Naive thymus-derived CD4-positive, alpha-beta T cell (primary cell): ENCODE measurements at regions of chr7 and their contacts with region 1.

Region 1: DNA sequence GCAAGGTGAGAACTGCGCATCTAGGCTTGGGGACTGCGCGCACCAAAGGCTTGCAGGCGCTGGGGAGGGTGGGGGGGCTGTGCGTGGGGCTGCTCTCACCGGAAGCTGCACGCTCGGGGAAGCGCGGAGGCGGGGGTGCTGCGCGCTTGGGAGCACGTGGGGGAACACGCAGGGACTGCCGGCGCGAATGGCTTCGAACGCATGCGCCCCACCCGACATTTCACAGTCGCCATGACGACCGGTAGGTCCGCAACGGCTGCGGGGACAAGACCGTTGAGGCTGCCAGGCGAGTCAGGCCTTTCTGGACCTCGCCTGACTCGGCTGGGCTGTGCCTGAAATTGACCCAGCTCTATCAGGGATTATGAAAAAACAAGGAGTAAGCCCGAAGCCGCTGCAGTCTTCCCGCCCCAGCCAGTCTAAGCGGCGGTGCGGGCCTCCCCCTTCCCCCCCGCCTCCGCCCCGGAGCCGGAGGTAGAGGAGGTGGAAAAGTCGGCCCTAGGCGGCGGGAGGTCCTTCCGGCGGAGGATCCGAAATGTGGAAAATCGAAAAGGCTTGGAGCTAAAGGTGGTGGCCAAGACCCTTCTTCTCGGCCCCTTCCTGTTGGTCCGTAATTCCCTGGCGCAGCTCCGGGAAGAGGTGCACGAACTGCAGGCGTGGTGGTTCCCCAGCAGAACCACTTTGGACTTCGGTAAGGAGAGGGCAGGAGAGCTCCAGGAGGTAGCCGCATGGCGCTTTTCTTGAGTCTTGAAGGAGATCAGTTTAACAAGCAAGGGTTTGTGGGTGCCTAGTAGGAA is 34.9 kb upstream of the STEAP1 start:
- DNase-seq: peak in 7 of 9 donors; percentile 8 to 65 (median 39)
- ATAC-seq: peak; percentile 46
- H3K4me3 ChIP-seq: no peak overlapping the region
- H3K4me3 Mint-ChIP-seq: peak overlapping the region; percentile 39 to 86 (median 82)
- H3K27ac ChIP-seq: no peak overlapping the region
- H3K27ac Mint-ChIP-seq: peak overlapping the region in 1 of 9 donors; percentile 72
- H3K4me1 ChIP-seq: no peaks in the 10 kb centered on the region
- H3K4me1 Mint-ChIP-seq: peaks cover 6 to 18% (median 11%) of the 10 kb centered on the region in 7 donors
- H3K27me3 ChIP-seq: no peaks in the 10 kb centered on the region
- H3K27me3 Mint-ChIP-seq: peaks cover 20 to 34% (median 25%) of the 10 kb centered on the region in 5 donors

Region 2: DNA sequence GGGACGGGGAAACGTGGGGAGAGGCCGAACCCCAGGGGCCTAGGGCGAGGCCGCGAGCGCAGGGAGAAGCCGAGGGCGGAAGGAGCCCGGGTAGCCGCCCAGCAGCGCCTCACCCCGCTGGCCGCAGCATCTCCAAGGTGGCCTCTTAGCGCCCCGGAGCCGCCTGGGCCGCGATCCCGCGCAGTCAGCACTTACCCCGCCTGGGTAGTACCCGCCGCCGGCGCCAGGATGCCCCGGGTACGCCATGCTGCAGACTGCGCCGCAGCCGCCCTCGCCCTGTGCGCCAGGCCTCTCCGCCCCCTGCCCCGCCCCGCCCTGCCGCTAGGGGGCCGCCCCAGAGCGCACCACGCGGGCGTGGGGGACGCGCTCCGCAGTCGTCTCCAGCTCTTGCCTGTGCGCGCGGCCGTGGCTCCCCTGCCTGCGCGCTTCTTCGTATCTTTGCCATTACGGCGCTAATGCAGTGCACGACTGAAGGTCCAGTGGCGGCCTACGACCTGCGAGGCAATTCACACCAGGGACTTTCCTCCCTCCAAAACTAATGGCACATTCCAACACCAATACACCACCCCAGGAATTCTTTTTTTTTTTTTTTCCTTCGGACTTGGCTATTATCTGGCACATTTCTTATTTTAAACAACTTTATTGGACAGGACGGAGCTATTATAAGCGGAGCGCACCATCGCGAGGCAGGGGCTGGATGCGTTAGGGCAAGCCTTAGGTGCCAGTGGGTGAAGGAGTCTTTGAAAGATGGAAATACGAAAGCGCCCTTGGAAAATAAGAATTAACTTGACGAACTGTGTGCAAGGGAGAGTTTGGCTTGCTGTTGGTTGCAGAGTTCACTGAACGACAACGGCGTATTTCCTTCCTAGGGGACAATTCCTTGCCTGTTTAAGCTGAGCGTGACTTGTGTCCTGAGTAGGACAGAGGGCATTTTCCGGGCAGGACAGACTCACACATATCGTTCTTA is 1899.3 kb before region 1 on chr7 and contains the start of gene SRI:
- CTCF ChIA-PET with region 1: no interaction called
- POLR2A ChIA-PET with region 1: no interaction called
- intact Hi-C with region 1: loop called in 1 of 2 experiments (anchors 5 kb)
- DNase-seq: peak; percentile 85 to 95 (median 93)
- ATAC-seq: peak; percentile 98
- H3K4me3 ChIP-seq: peak within 1 kb of the TSS; percentile 97
- H3K4me3 Mint-ChIP-seq: peak within 1 kb of the TSS; percentile 95 to 99 (median 96)
- H3K27ac ChIP-seq: peak within 1 kb of the TSS; percentile 86
- H3K27ac Mint-ChIP-seq: peak within 1 kb of the TSS; percentile 90 to 99 (median 94)
- H3K4me1 ChIP-seq: peaks cover 15 to 18% of the 10 kb centered on the region in 2 donors
- H3K4me1 Mint-ChIP-seq: peaks cover 13 to 42% (median 34%) of the 10 kb centered on the region in 7 donors
- H3K27me3 ChIP-seq: peaks cover 0 to 4% of the 10 kb centered on the region in 2 donors
- H3K27me3 Mint-ChIP-seq: peaks cover 0 to 8% (median 0%) of the 10 kb centered on the region in 5 donors
- total RNA-seq, gene SRI: 39.9 to 131 (median 60.0) TPM

Region 3: DNA sequence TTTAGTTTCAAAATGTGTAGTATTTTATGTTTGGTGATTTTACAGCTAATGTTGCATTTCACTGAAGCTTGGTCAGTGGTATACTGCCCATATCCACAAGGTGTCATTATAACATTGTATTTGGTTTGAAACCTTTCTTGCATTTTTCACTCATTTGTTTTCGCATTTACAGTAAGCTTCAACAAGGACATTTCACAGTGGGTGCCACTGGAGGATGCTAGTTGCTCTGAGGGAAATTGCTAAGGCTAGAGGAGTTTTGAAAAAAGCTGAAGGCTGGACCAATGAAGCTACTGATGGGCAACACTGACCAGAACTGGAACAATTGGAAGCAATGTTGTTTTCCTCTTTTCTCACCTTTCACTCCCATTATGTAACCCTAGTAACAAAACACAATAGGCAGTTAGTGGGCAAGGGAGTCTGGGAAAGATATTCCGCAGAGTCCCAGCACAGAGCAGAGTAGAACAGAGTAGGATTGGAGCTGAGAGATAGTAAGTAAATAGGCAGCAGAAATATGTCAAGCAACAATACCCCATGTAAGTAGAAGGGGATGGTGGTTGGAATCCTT is 1875.9 kb before region 1 on chr7:
- CTCF ChIA-PET with region 1: interaction called, 3 read pairs
- POLR2A ChIA-PET with region 1: no interaction called
- intact Hi-C with region 1: loop called in 1 of 2 experiments (anchors 5 kb)
- DNase-seq: peak in 4 of 9 donors; percentile 4 to 13 (median 12)
- ATAC-seq: peak; percentile 77
- H3K4me3 ChIP-seq: no peak overlapping the region
- H3K4me3 Mint-ChIP-seq: no peak overlapping the region
- H3K27ac ChIP-seq: no peak overlapping the region
- H3K27ac Mint-ChIP-seq: no peak overlapping the region
- H3K4me1 ChIP-seq: no peaks in the 10 kb centered on the region
- H3K4me1 Mint-ChIP-seq: no peaks in the 10 kb centered on the region
- H3K27me3 ChIP-seq: no peaks in the 10 kb centered on the region
- H3K27me3 Mint-ChIP-seq: peaks cover 0 to 23% (median 13%) of the 10 kb centered on the region in 5 donors

Region 4: GRCh38 chr7:88449410-88449809 is 1670.0 kb before region 1 on chr7:
- CTCF ChIA-PET with region 1: no interaction called
- POLR2A ChIA-PET with region 1: no interaction called
- intact Hi-C with region 1: no loop called
- DNase-seq: no peak
- ATAC-seq: no peak
- H3K4me3 ChIP-seq: no peak overlapping the region
- H3K4me3 Mint-ChIP-seq: no peak overlapping the region
- H3K27ac ChIP-seq: no peak overlapping the region
- H3K27ac Mint-ChIP-seq: no peak overlapping the region
- H3K4me1 ChIP-seq: no peaks in the 10 kb centered on the region
- H3K4me1 Mint-ChIP-seq: no peaks in the 10 kb centered on the region
- H3K27me3 ChIP-seq: peaks cover 0 to 2% of the 10 kb centered on the region in 2 donors
- H3K27me3 Mint-ChIP-seq: peaks cover 0 to 6% (median 0%) of the 10 kb centered on the region in 5 donors

Region 5: GRCh38 chr7:88789480-88790064 is 1329.8 kb before region 1 on chr7:
- CTCF ChIA-PET with region 1: no interaction called
- POLR2A ChIA-PET with region 1: no interaction called
- intact Hi-C with region 1: loop called (anchors 2 to 10 kb)
- DNase-seq: peak in 6 of 9 donors; percentile 1 to 42 (median 33)
- ATAC-seq: no peak
- H3K4me3 ChIP-seq: no peak overlapping the region
- H3K4me3 Mint-ChIP-seq: no peak overlapping the region
- H3K27ac ChIP-seq: no peak overlapping the region
- H3K27ac Mint-ChIP-seq: no peak overlapping the region
- H3K4me1 ChIP-seq: no peaks in the 10 kb centered on the region
- H3K4me1 Mint-ChIP-seq: no peaks in the 10 kb centered on the region
- H3K27me3 ChIP-seq: no peaks in the 10 kb centered on the region
- H3K27me3 Mint-ChIP-seq: no peaks in the 10 kb centered on the region

Region 6: GRCh38 chr7:88951826-88952225 is 1167.5 kb before region 1 on chr7:
- CTCF ChIA-PET with region 1: no interaction called
- POLR2A ChIA-PET with region 1: no interaction called
- intact Hi-C with region 1: no loop called
- DNase-seq: no peak
- ATAC-seq: no peak
- H3K4me3 ChIP-seq: no peak overlapping the region
- H3K4me3 Mint-ChIP-seq: no peak overlapping the region
- H3K27ac ChIP-seq: no peak overlapping the region
- H3K27ac Mint-ChIP-seq: no peak overlapping the region
- H3K4me1 ChIP-seq: no peaks in the 10 kb centered on the region
- H3K4me1 Mint-ChIP-seq: no peaks in the 10 kb centered on the region
- H3K27me3 ChIP-seq: no peaks in the 10 kb centered on the region
- H3K27me3 Mint-ChIP-seq: peaks cover 0 to 4% (median 0%) of the 10 kb centered on the region in 5 donors

Region 7: GRCh38 chr7:90222811-90223725 is 103.7 kb after region 1 on chr7:
- CTCF ChIA-PET with region 1: no interaction called
- POLR2A ChIA-PET with region 1: no interaction called
- intact Hi-C with region 1: no loop called
- DNase-seq: no peak
- ATAC-seq: no peak
- H3K4me3 ChIP-seq: no peak overlapping the region
- H3K4me3 Mint-ChIP-seq: no peak overlapping the region
- H3K27ac ChIP-seq: no peak overlapping the region
- H3K27ac Mint-ChIP-seq: no peak overlapping the region
- H3K4me1 ChIP-seq: no peaks in the 10 kb centered on the region
- H3K4me1 Mint-ChIP-seq: no peaks in the 10 kb centered on the region
- H3K27me3 ChIP-seq: no peaks in the 10 kb centered on the region
- H3K27me3 Mint-ChIP-seq: peaks cover 15 to 57% (median 43%) of the 10 kb centered on the region in 5 donors

Region 8: DNA sequence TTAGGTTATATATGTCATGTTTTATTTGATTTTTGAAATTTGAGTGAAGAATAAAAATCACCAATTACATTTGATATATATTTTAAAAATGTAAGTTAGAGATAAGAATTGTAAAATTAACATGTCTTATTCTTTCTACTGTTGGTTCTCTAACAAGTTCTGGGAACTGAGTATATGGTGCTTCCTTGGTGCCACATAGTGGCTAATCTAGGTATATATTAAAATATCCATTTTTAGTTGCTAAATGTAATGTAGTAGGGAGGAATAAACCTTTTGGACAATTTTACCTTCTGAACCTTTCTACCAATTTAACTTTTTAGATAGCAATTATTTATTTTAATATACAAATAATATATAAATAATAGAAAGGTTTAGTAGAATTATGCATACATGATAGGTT is 143.1 kb after region 1 on chr7:
- CTCF ChIA-PET with region 1: no interaction called
- POLR2A ChIA-PET with region 1: no interaction called
- intact Hi-C with region 1: no loop called
- DNase-seq: peak in 1 of 9 donors; percentile 4
- ATAC-seq: no peak
- H3K4me3 ChIP-seq: no peak overlapping the region
- H3K4me3 Mint-ChIP-seq: no peak overlapping the region
- H3K27ac ChIP-seq: no peak overlapping the region
- H3K27ac Mint-ChIP-seq: no peak overlapping the region
- H3K4me1 ChIP-seq: no peaks in the 10 kb centered on the region
- H3K4me1 Mint-ChIP-seq: no peaks in the 10 kb centered on the region
- H3K27me3 ChIP-seq: no peaks in the 10 kb centered on the region
- H3K27me3 Mint-ChIP-seq: peaks cover 6 to 27% (median 13%) of the 10 kb centered on the region in 5 donors